Activated T-helper 2 cell treated with anti-CD3 and anti-CD28 coated beads, Interferon-gamma antibody, Interleukin-2, Interleukin-4, amounts not matched to agents 10 μg/mL and 5 μg/mL and 100 μg/mL, durations not matched to agents 14 hours and 24 hours and 36 hours (primary cell): ENCODE measurements at regions of chr10 and their contacts with region 1.

Region 1: GRCh38 chr10:92290837-92291615 is at the starts of genes CPEB3 and MARCHF5:
- DNase-seq: peak; percentile 89
- H3K4me3 Mint-ChIP-seq: peak within 1 kb of the TSS; percentile 94
- H3K27ac Mint-ChIP-seq: peak within 1 kb of the TSS; percentile 77
- H3K4me1 Mint-ChIP-seq: peaks cover 21% of the 10 kb centered on the region
- H3K27me3 Mint-ChIP-seq: no peaks in the 10 kb centered on the region
- total RNA-seq, gene CPEB3: 1.9 TPM in 2 replicates
- total RNA-seq, gene MARCHF5: 19.4 and 20.3 TPM in 2 replicates

Region 2: DNA sequence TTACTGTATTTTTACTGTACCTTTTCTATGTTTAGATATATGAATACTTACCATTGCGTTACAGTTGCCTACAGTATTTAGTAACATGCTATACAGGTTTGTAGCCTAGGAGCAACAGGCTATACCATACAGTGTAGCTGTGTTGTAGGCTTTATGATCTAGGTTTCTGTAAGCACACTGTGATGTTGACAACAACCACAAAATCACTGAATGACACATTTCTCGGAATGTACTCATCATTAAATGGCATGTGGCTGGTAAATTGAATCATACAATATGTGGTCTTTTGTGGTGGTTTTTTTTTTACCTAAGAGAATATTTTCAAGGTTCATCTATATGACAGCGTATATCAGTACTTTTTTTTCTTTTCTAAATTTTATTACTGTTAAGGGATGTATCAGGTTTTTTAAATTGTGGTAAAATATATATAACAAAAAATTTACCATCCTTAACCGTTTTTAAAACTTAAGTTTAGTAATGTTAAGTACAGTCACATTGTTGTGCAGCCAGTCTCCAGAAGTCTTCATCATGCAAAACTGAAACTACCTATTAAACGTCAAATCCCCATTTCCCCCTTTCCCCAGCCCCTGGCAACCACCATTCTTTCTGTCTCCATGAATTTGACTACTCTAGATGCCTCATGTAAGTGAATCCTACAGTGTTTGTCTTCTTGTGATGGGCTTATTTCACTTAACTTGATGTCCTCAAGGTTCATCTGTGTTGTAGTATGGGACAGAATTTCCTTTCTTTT is 346.0 kb before region 1 on chr10:
- intact Hi-C with region 1: loop called (anchors 10 kb)
- DNase-seq: no peak
- H3K4me3 Mint-ChIP-seq: peak overlapping the region; percentile 55
- H3K27ac Mint-ChIP-seq: peak overlapping the region; percentile 78
- H3K4me1 Mint-ChIP-seq: peaks cover 26% of the 10 kb centered on the region
- H3K27me3 Mint-ChIP-seq: no peaks in the 10 kb centered on the region

Region 3: GRCh38 chr10:92087750-92088395 is 203.2 kb before region 1 on chr10:
- intact Hi-C with region 1: loop called (anchors 5 kb)
- DNase-seq: peak; percentile 42
- H3K4me3 Mint-ChIP-seq: no peak overlapping the region
- H3K27ac Mint-ChIP-seq: no peak overlapping the region
- H3K4me1 Mint-ChIP-seq: peaks cover 5% of the 10 kb centered on the region
- H3K27me3 Mint-ChIP-seq: no peaks in the 10 kb centered on the region

Region 4: GRCh38 chr10:92103376-92104090 is 187.5 kb before region 1 on chr10:
- intact Hi-C with region 1: loop called (anchors 1 kb)
- DNase-seq: no peak
- H3K4me3 Mint-ChIP-seq: no peak overlapping the region
- H3K27ac Mint-ChIP-seq: no peak overlapping the region
- H3K4me1 Mint-ChIP-seq: peaks cover 19% of the 10 kb centered on the region
- H3K27me3 Mint-ChIP-seq: peaks cover 5% of the 10 kb centered on the region

Region 5: GRCh38 chr10:92208736-92209327 is 82.2 kb before region 1 on chr10:
- intact Hi-C with region 1: loop called (anchors 5 kb)
- DNase-seq: no peak
- H3K4me3 Mint-ChIP-seq: no peak overlapping the region
- H3K27ac Mint-ChIP-seq: no peak overlapping the region
- H3K4me1 Mint-ChIP-seq: peaks cover 10% of the 10 kb centered on the region
- H3K27me3 Mint-ChIP-seq: peaks cover 24% of the 10 kb centered on the region

Region 6: GRCh38 chr10:92240289-92241157 is 50.5 kb before region 1 on chr10:
- intact Hi-C with region 1: loop called (anchors 1 kb)
- DNase-seq: peak; percentile 18
- H3K4me3 Mint-ChIP-seq: peak overlapping the region; percentile 78
- H3K27ac Mint-ChIP-seq: peak overlapping the region; percentile 1
- H3K4me1 Mint-ChIP-seq: peaks cover 39% of the 10 kb centered on the region
- H3K27me3 Mint-ChIP-seq: peaks cover 46% of the 10 kb centered on the region

Region 7: GRCh38 chr10:92573798-92574547 is 282.9 kb after region 1 on chr10 and contains the start of gene IDE:
- intact Hi-C with region 1: loop called (anchors 5 kb)
- DNase-seq: peak; percentile 83
- H3K4me3 Mint-ChIP-seq: peak within 1 kb of the TSS; percentile 68
- H3K27ac Mint-ChIP-seq: peak within 1 kb of the TSS; percentile 87
- H3K4me1 Mint-ChIP-seq: peaks cover 29% of the 10 kb centered on the region
- H3K27me3 Mint-ChIP-seq: peaks cover 2% of the 10 kb centered on the region
- total RNA-seq, gene IDE: 45.3 and 47.2 TPM in 2 replicates